ENCODE measurements at regions of chr5 and their contacts with region 1.

Region 1: DNA sequence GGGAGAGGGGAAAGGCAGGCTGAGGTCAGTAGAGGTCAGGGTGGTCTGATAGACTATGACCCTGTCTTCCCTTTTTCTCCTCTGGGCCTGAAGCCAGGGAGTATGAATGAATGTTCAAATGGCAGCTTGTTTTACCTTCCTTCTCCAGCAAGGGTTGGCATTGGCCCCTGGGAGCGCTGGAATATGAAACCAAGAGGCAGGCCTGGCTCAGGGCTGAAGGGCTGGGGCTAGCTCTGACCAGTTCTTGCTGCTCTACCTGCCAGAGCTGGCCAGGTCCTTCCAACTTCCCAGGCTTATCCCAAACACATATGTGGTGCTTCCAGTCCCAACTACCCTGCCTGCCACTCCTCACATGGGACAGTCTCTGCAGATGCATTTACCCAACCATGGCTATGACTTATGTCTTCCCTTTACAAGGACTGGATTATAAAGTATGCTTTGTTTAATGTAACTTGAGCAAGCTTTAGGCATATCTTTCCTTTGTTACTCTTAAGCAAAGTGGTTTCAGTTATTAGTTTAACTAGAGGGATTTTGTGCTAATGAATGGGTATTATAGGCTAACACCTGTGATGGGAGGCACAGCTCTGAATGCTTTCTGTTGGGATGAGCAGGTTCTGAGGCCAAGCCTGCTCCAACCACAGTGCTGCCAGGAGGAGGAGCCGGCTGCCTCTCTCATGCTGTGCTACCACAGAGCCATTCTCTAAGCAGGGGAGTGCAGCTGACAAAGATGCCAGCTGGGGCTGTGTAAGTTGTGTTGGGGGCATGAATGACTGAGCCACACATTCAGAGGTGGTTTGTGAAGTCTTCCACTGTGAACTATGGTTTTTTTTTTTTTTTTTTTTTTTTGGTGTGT is 6.1 kb downstream of the CCNI2 start:
- DNase-seq: no peak
- ATAC-seq: peak; percentile 61
- H3K4me3 Mint-ChIP-seq: no peak overlapping the region
- H3K27ac Mint-ChIP-seq: no peak overlapping the region
- H3K4me1 Mint-ChIP-seq: peaks cover 43% of the 10 kb centered on the region
- H3K27me3 Mint-ChIP-seq: no peaks in the 10 kb centered on the region

Region 2: GRCh38 chr5:132802044-132802684 is 48.8 kb after region 1 on chr5:
- CTCF ChIA-PET with region 1: interaction called, 10 read pairs
- POLR2A ChIA-PET with region 1: no interaction called
- DNase-seq: no peak
- ATAC-seq: no peak
- H3K4me3 Mint-ChIP-seq: no peak overlapping the region
- H3K27ac Mint-ChIP-seq: no peak overlapping the region
- H3K4me1 Mint-ChIP-seq: no peaks in the 10 kb centered on the region
- H3K27me3 Mint-ChIP-seq: peaks cover 65% of the 10 kb centered on the region

Measured in activated CD8-positive, alpha-beta T cell treated with anti-CD3 and anti-CD28 coated beads, Interleukin-2, amount 10 ng/mL, durations not matched to agents 7 days and 5 days (primary cell).